Cardiac septum (tissue), 1 donor: ENCODE measurements at regions of chr1 and their contacts with region 1.

Region 1: GRCh38 chr1:70410604-70411359 is at the start of gene CTH:
- DNase-seq: peak; percentile 98
- total RNA-seq, gene CTH: 0.43 TPM

Region 2: DNA sequence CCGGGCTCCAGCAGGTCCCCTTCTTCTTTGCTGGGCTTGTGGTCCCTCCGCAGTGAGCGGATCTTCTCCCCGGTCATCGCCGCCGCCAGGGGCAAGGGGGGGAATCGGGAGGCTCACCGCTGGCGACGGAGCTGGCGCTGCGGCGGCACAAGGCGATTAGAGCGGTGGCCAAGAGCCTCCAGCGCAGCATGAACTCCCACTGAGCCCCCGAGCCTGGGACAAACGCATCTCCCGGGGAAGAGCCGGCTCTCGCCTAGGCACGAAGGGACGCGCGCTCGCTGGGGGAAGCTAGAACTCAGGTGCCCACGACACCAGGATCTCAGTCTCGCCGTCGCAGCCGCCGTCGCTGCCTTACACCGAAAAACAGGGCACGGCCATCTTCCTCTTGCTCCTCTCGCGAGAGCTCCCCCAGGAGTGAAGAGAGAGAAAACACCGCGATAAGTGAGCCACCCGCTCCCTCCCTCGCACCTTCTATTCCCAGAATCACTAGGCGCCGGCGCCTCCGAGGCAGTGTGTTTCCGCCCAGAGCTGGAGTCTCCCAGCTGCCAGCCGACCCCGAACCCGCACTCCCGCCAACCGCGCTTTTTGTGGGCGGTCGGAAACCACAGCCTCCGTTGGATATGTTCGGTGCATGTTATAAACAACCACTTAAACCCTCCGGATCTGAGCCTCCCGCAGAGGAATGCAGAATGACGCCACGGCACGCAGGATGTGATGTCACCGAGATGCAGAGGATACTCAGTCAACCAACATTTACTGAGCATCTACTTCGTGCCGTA is 56.3 kb before region 1 on chr1 and contains the start of gene ANKRD13C:
- intact Hi-C with region 1: loop called (anchors 2 kb)
- DNase-seq: peak; percentile 95
- total RNA-seq, gene ANKRD13C: 11.8 TPM